Naive thymus-derived CD4-positive, alpha-beta T cell (primary cell): ENCODE measurements at regions of chr5 and their contacts with region 1.

Region 1: GRCh38 chr5:75734913-75735789 is 17.9 kb upstream of the POC5 start:
- DNase-seq: peak in 2 of 9 donors; percentile 14
- ATAC-seq: no peak
- H3K4me3 ChIP-seq: no peak overlapping the region
- H3K4me3 Mint-ChIP-seq: no peak overlapping the region
- H3K27ac ChIP-seq: no peak overlapping the region
- H3K27ac Mint-ChIP-seq: no peak overlapping the region
- H3K4me1 ChIP-seq: no peaks in the 10 kb centered on the region
- H3K4me1 Mint-ChIP-seq: no peaks in the 10 kb centered on the region
- H3K27me3 ChIP-seq: no peaks in the 10 kb centered on the region
- H3K27me3 Mint-ChIP-seq: peaks cover 3 to 13% (median 6%) of the 10 kb centered on the region in 5 donors

Region 2: DNA sequence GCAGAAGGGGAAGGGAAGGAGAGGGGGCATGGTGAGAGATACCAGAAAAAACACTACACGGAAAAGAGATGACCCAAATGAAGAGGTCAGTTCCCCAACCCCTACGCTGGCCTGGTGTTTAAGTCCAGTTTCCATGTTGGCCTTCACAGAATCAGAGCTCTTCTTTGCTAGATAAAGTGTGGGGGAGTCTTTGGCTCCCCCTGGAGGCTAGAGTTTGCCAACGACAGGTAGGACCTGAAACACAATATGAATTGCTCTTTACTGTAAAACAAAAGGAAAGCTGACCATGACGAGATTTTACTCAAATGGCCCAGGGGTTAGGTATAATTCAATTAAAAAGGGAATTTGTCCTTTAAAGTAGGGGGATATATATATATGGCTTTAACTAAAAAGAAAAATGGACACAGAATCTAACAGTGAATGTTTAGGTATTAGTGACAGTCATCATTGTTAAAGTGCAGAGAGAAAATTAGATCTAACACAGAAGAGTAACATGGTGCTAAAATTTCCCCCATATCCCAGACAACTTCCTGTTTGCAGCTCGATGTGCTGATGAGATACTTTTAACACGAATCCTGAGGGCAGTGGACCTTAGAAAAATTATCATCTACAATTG is 440.0 kb after region 1 on chr5:
- CTCF ChIA-PET with region 1: no interaction called
- POLR2A ChIA-PET with region 1: no interaction called
- intact Hi-C with region 1: loop called in 1 of 2 experiments (anchors 2 kb)
- DNase-seq: peak in 7 of 9 donors; percentile 12 to 34 (median 26)
- ATAC-seq: peak; percentile 75
- H3K4me3 ChIP-seq: no peak overlapping the region
- H3K4me3 Mint-ChIP-seq: peak overlapping the region in 7 of 10 donors; percentile 30 to 70 (median 52)
- H3K27ac ChIP-seq: no peak overlapping the region
- H3K27ac Mint-ChIP-seq: no peak overlapping the region
- H3K4me1 ChIP-seq: peaks cover 4 to 16% of the 10 kb centered on the region in 2 donors
- H3K4me1 Mint-ChIP-seq: peaks cover 15 to 20% (median 17%) of the 10 kb centered on the region in 7 donors
- H3K27me3 ChIP-seq: no peaks in the 10 kb centered on the region
- H3K27me3 Mint-ChIP-seq: peaks cover 0 to 6% (median 0%) of the 10 kb centered on the region in 5 donors

Region 3: DNA sequence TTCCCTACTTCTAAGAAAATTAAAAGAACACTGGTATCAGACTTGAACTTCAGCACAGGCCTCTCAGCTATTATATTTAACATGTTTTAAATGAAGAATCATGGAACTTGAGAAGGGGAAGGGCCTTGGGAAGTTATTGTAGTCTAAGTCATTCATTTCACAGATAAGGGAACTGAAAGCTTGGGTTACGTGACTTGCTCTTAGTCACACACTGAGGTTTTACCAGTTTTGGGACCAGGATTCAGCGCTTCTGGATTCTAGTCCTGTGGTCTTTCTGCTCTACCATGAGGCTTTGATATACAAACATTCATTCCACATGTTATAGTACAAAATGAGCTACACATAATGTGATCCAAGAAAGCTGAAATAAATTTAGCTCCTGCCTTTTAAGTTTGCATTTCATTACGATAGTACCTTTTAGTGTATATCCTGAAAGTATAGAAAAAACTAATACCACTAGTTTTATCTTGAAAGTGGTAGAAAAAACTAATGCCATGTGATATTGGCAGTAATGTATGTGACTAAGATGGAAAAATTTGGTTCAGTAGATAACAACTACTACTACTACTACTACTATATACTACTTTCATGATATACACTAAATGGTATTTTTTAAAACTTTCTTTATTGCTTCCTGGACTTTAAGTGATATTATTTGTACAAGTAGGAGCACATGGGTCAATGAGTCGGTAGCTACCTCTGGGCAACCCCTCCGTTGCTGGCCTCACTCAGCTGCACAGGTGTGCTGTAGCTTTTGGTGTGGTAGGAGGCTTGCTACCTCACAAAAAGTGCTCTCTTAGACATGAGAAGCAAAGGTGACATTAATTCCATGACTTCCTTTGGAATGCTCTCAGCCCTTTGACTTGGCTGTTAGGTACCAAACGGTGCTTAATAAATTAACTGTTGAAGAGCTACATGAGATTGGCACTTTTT is 847.3 kb after region 1 on chr5:
- CTCF ChIA-PET with region 1: interaction called, 4 read pairs
- POLR2A ChIA-PET with region 1: no interaction called
- intact Hi-C with region 1: loop called in 1 of 2 experiments (anchors 2 kb)
- DNase-seq: no peak
- ATAC-seq: peak; percentile 76
- H3K4me3 ChIP-seq: no peak overlapping the region
- H3K4me3 Mint-ChIP-seq: no peak overlapping the region
- H3K27ac ChIP-seq: no peak overlapping the region
- H3K27ac Mint-ChIP-seq: peak overlapping the region in 4 of 9 donors; percentile 18 to 76 (median 47)
- H3K4me1 ChIP-seq: no peaks in the 10 kb centered on the region
- H3K4me1 Mint-ChIP-seq: peaks cover 0 to 31% (median 13%) of the 10 kb centered on the region in 7 donors
- H3K27me3 ChIP-seq: no peaks in the 10 kb centered on the region
- H3K27me3 Mint-ChIP-seq: no peaks in the 10 kb centered on the region